SK-N-SH (cell line): ENCODE measurements at regions of chr11 and their contacts with region 1.

Region 1: DNA sequence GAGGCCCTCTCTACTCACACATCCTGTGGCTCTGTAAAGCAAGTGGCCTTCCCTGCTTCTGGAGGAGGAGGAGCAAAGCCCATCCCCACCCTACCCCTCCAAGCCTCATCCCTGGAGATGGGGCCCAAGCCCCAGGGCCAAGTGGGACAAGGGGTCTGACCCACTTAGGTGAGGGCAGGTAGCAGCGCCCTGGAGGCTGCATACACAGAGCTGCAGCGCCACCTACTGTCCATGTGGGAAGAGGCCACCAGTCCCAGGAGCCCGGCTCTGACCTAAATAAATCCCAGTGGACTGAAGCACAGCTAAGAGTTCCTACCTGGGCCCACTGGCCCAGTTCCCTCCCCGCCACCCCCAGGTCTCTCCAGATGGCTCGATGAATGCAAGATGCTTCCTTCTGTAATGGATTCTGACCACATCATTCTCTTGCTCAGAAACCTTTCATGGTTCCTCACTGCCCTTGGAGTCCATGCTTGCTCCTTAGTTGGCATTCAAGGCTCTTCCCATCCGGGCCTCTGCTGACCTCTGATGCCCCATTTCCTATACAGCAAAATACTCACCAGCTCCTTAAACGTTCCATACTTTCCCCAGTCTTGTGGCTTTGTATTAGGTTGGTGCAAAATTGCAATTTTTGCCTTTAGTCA is 62.1 kb downstream of the THAP12 start:
- DNase-seq: peak; percentile 91
- H3K4me3 ChIP-seq: no peak overlapping the region; a peak in 1 of 4 replicates
- H3K27ac ChIP-seq: no peak overlapping the region
- H3K4me1 ChIP-seq: no peaks in the 10 kb centered on the region; a peak in 1 of 4 replicates
- H3K27me3 ChIP-seq: no peaks in the 10 kb centered on the region
- CTCF ChIP-seq: peak; percentile 91
- EP300 ChIP-seq: no peak
- RAD21 ChIP-seq: peak; percentile 97

Region 2: DNA sequence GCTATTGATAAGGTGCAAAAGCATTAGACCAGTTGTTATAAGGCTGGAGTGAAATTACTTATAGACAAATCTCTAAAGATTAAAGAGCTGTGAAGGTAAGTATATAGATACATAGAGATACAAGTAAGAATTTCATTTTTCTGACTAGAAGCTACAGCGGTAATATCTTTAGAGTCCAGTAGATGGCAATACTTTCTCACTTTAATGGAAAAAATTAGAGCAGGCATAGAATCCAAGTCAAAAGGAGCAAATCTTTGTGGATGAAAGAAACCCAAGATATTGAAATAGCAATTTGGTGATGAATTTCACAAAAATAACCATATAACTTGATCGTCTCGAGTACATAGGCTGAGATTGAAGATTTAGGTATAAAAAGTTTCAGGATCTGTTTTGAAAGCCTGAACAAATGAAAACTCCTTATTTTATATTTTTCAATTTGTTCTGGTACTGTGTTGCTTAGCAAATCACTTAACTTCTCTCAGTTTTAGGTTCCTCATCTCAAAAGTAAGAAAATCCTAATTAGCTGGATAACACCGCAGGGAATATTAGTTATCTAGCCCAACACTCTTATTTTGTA is 421.9 kb before region 1 on chr11:
- CTCF ChIA-PET with region 1: interaction called, 49 read pairs
- POLR2A ChIA-PET with region 1: no interaction called
- DNase-seq: peak; percentile 44
- H3K4me3 ChIP-seq: no peak overlapping the region; a peak in 1 of 4 replicates
- H3K27ac ChIP-seq: no peak overlapping the region
- H3K4me1 ChIP-seq: no peaks in the 10 kb centered on the region; a peak in 2 of 4 replicates
- H3K27me3 ChIP-seq: no peaks in the 10 kb centered on the region
- CTCF ChIP-seq: peak; percentile 81
- EP300 ChIP-seq: no peak
- RAD21 ChIP-seq: peak; percentile 92

Region 3: GRCh38 chr11:75903276-75903675 is 415.6 kb before region 1 on chr11:
- CTCF ChIA-PET with region 1: interaction called, 38 read pairs
- POLR2A ChIA-PET with region 1: no interaction called
- DNase-seq: no peak
- H3K4me3 ChIP-seq: no peak overlapping the region
- H3K27ac ChIP-seq: no peak overlapping the region
- H3K4me1 ChIP-seq: peaks cover 0 to 12% of the 10 kb centered on the region in 2 experiments; a peak in 2 of 4 replicates
- H3K27me3 ChIP-seq: no peaks in the 10 kb centered on the region
- CTCF ChIP-seq: no peak
- EP300 ChIP-seq: no peak
- RAD21 ChIP-seq: no peak

Region 4: GRCh38 chr11:76235233-76236091 is 83.4 kb before region 1 on chr11:
- CTCF ChIA-PET with region 1: interaction called, 14 read pairs
- POLR2A ChIA-PET with region 1: no interaction called
- DNase-seq: peak; percentile 96
- H3K4me3 ChIP-seq: peak overlapping the region; percentile 94 to 99
- H3K27ac ChIP-seq: peak overlapping the region; percentile 75 to 90
- H3K4me1 ChIP-seq: peaks cover 0 to 22% of the 10 kb centered on the region in 2 experiments; a peak in 2 of 4 replicates
- H3K27me3 ChIP-seq: no peaks in the 10 kb centered on the region
- CTCF ChIP-seq: no peak
- EP300 ChIP-seq: peak in 1 of 2 experiments; percentile 23; a peak in 1 of 4 replicates
- RAD21 ChIP-seq: no peak

Region 5: DNA sequence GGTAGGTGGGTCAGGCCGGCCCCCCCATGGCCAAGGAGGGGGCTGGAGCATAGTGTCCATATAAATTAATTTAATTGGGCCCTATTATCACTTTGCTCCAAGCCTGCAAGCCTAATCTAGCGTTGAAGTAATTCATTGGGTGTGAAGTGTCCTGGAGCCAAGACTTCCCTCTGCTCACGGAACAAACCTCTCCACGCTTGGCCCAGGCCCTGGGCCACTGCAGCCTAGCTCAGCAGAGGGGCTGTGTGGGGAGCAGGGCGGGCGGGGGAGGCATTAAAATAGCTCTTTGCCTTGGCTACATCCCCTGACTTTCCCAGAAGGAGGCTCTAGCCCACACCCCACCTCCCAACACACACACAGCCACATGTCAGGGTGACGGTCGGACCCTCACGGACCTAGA is 11.5 kb before region 1 on chr11:
- CTCF ChIA-PET with region 1: interaction called, 23 read pairs
- POLR2A ChIA-PET with region 1: no interaction called
- DNase-seq: no peak
- H3K4me3 ChIP-seq: no peak overlapping the region
- H3K27ac ChIP-seq: no peak overlapping the region; a peak in 1 of 4 replicates
- H3K4me1 ChIP-seq: peaks cover 0 to 17% of the 10 kb centered on the region in 2 experiments; a peak in 1 of 4 replicates
- H3K27me3 ChIP-seq: peaks cover 6% of the 10 kb centered on the region; the same call in 1 of the 2 replicates
- CTCF ChIP-seq: no peak
- EP300 ChIP-seq: no peak
- RAD21 ChIP-seq: no peak

Region 6: GRCh38 chr11:76329084-76329984 is 10.5 kb after region 1 on chr11:
- CTCF ChIA-PET with region 1: interaction called, 26 read pairs
- POLR2A ChIA-PET with region 1: no interaction called
- DNase-seq: no peak
- H3K4me3 ChIP-seq: no peak overlapping the region
- H3K27ac ChIP-seq: no peak overlapping the region
- H3K4me1 ChIP-seq: no peaks in the 10 kb centered on the region
- H3K27me3 ChIP-seq: no peaks in the 10 kb centered on the region; the same call in 1 of the 2 replicates
- CTCF ChIP-seq: no peak
- EP300 ChIP-seq: no peak
- RAD21 ChIP-seq: no peak

Region 7: GRCh38 chr11:76397383-76397782 is 78.5 kb after region 1 on chr11:
- CTCF ChIA-PET with region 1: no interaction called
- POLR2A ChIA-PET with region 1: no interaction called
- DNase-seq: no peak
- H3K4me3 ChIP-seq: no peak overlapping the region
- H3K27ac ChIP-seq: no peak overlapping the region
- H3K4me1 ChIP-seq: no peaks in the 10 kb centered on the region
- H3K27me3 ChIP-seq: no peaks in the 10 kb centered on the region
- CTCF ChIP-seq: no peak
- EP300 ChIP-seq: no peak
- RAD21 ChIP-seq: no peak

Region 8: GRCh38 chr11:76512851-76513653 is 194.2 kb after region 1 on chr11:
- CTCF ChIA-PET with region 1: no interaction called
- POLR2A ChIA-PET with region 1: no interaction called
- DNase-seq: peak; percentile 13
- H3K4me3 ChIP-seq: no peak overlapping the region
- H3K27ac ChIP-seq: no peak overlapping the region
- H3K4me1 ChIP-seq: peaks cover 0 to 21% of the 10 kb centered on the region in 2 experiments; a peak in 1 of 4 replicates
- H3K27me3 ChIP-seq: no peaks in the 10 kb centered on the region
- CTCF ChIP-seq: peak; percentile 74
- EP300 ChIP-seq: no peak
- RAD21 ChIP-seq: peak; percentile 66

Region 9: GRCh38 chr11:76807206-76807875 is 488.5 kb after region 1 on chr11:
- CTCF ChIA-PET with region 1: no interaction called
- POLR2A ChIA-PET with region 1: no interaction called
- DNase-seq: peak; percentile 83
- H3K4me3 ChIP-seq: no peak overlapping the region; a peak in 1 of 4 replicates
- H3K27ac ChIP-seq: no peak overlapping the region
- H3K4me1 ChIP-seq: peaks cover 0 to 9% of the 10 kb centered on the region in 2 experiments; a peak in 1 of 4 replicates
- H3K27me3 ChIP-seq: no peaks in the 10 kb centered on the region
- CTCF ChIP-seq: peak; percentile 78
- EP300 ChIP-seq: no peak
- RAD21 ChIP-seq: peak; percentile 51